ENCODE measurements at regions of chr2 and their contacts with region 1.

Region 1: GRCh38 chr2:41853427-41854216 is 194.2 kb upstream of the PKDCC start:
- DNase-seq: peak; percentile 69
- H3K4me3 ChIP-seq: no peak overlapping the region
- H3K27ac ChIP-seq: no peak overlapping the region
- H3K4me1 ChIP-seq: no peaks in the 10 kb centered on the region
- H3K27me3 ChIP-seq: no peaks in the 10 kb centered on the region
- CTCF ChIP-seq: peak; percentile 68

Region 2: DNA sequence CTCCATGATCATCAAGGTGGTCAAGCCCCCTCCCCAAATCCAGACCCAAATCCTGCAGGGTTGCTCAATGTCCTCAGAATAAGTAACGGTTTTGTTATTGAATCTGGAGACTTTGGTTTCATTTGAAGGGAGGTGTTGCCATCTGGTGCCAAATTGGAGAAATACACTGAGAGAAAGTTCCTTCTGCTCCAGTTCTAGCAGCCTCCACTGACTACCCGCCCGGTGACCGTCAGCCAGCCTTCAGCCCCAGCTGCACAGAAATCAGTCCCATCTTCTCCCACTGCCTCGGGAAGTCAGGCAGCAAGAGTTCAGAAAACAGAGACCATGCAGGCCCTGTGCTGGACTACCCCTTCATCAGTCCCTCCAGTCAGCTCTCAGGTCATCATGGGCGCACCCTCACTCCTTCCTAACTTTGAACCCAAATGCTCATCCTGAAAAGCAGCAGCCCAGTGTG is 232.9 kb after region 1 on chr2:
- intact Hi-C with region 1: loop called (anchors 5 kb)
- DNase-seq: peak; percentile 76
- H3K4me3 ChIP-seq: no peak overlapping the region
- H3K27ac ChIP-seq: no peak overlapping the region
- H3K4me1 ChIP-seq: no peaks in the 10 kb centered on the region
- H3K27me3 ChIP-seq: no peaks in the 10 kb centered on the region
- CTCF ChIP-seq: peak; percentile 58

Region 3: GRCh38 chr2:42328148-42328833 is 474.7 kb after region 1 on chr2:
- intact Hi-C with region 1: loop called (anchors 10 kb)
- DNase-seq: no peak
- H3K4me3 ChIP-seq: no peak overlapping the region
- H3K27ac ChIP-seq: no peak overlapping the region
- H3K4me1 ChIP-seq: no peaks in the 10 kb centered on the region
- H3K27me3 ChIP-seq: no peaks in the 10 kb centered on the region
- CTCF ChIP-seq: no peak

Measured in colonic mucosa (tissue), 4 donors.